Activated CD4-positive, alpha-beta T cell treated with anti-CD3 and anti-CD28 coated beads, Interleukin-2, amount 10 ng/mL, durations not matched to agents 24 days and 14 days (primary cell): ENCODE measurements at regions of chr10 and their contacts with region 1.

Region 1: DNA sequence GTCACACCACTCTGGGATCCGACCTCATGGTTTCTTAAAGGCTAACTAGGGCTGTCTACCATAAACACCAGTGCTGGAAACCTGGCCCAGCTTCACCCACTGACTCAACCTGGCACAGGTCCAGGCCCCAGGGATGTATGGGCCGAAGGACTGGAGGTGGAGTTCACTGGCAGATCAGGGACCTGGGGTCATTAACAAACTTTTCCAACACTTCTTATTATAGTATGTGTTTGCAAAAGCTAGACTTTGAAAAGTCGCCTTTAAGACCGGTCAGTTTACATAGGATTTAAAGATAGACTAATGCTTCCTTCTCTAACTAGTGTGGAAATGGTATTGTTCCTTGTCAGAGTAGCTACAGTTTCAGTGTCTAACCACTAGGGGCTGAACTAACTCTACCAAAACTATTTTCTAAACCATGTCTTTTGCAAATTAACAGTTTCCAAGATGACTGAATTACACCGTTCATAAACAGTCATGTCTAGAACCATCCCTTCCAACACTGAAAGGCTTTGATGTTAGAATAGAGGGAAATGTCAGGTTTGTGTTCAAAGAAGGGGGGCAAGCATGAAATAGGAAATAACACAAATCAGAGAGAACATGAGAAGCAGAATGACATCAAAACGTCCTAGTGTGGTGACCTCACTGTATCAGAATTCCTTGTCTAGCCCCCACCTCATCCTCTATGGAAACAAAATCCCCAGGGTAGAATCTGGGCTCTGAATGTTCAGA is 29.7 kb downstream of the STN1 start:
- DNase-seq: peak; percentile 70
- H3K4me3 Mint-ChIP-seq: no peak overlapping the region
- H3K27ac Mint-ChIP-seq: peak overlapping the region; percentile 76
- H3K4me1 Mint-ChIP-seq: peaks cover 28% of the 10 kb centered on the region
- H3K27me3 Mint-ChIP-seq: no peaks in the 10 kb centered on the region

Region 2: GRCh38 chr10:103712570-103713498 is 175.4 kb before region 1 on chr10:
- intact Hi-C with region 1: loop called (anchors 1 kb)
- DNase-seq: peak; percentile 95
- H3K4me3 Mint-ChIP-seq: no peak overlapping the region
- H3K27ac Mint-ChIP-seq: no peak overlapping the region
- H3K4me1 Mint-ChIP-seq: peaks cover 8% of the 10 kb centered on the region
- H3K27me3 Mint-ChIP-seq: no peaks in the 10 kb centered on the region

Region 3: GRCh38 chr10:103859161-103860086 is 28.9 kb before region 1 on chr10:
- intact Hi-C with region 1: no loop called
- DNase-seq: peak; percentile 89
- H3K4me3 Mint-ChIP-seq: no peak overlapping the region
- H3K27ac Mint-ChIP-seq: no peak overlapping the region
- H3K4me1 Mint-ChIP-seq: peaks cover 6% of the 10 kb centered on the region
- H3K27me3 Mint-ChIP-seq: peaks cover 45% of the 10 kb centered on the region

Region 4: GRCh38 chr10:103918053-103918846 is 30.0 kb after region 1 on chr10 and contains the start of gene STN1:
- intact Hi-C with region 1: loop called (anchors 1 kb)
- DNase-seq: peak; percentile 98
- H3K4me3 Mint-ChIP-seq: peak within 1 kb of the TSS; percentile 97
- H3K27ac Mint-ChIP-seq: peak within 1 kb of the TSS; percentile 97
- H3K4me1 Mint-ChIP-seq: peaks cover 33% of the 10 kb centered on the region
- H3K27me3 Mint-ChIP-seq: no peaks in the 10 kb centered on the region
- total RNA-seq, gene STN1: 23.6 and 24.1 TPM in 2 replicates

Region 5: DNA sequence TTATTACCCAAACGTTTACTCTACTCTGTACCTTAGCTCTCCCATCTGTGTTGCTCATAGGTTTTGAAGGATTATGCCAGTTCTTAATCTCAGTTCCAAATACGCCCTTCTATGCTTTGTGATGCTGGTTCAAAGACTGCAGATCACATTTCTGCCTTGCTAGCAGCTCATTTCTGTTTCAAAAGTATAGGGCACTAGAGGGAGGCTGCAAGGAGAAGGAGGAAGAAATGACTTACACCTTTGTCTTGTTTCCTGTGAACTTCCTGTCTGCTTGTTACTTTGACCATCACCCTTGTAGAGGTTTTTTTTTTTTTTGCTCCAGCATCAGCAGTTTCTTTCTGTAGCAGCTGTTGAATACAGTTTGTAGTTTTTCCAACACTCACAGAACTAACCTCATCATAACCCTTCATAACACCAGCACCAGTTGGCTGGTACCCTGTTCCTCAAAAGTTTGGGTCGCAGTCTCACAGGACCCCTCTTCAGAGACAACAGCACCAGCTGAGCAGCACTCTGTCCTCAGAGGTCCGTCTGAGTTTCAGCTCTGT is 95.2 kb after region 1 on chr10:
- intact Hi-C with region 1: loop called (anchors 1 kb)
- DNase-seq: peak; percentile 77
- H3K4me3 Mint-ChIP-seq: peak overlapping the region; percentile 79
- H3K27ac Mint-ChIP-seq: peak overlapping the region; percentile 78
- H3K4me1 Mint-ChIP-seq: peaks cover 49% of the 10 kb centered on the region
- H3K27me3 Mint-ChIP-seq: no peaks in the 10 kb centered on the region

Region 6: DNA sequence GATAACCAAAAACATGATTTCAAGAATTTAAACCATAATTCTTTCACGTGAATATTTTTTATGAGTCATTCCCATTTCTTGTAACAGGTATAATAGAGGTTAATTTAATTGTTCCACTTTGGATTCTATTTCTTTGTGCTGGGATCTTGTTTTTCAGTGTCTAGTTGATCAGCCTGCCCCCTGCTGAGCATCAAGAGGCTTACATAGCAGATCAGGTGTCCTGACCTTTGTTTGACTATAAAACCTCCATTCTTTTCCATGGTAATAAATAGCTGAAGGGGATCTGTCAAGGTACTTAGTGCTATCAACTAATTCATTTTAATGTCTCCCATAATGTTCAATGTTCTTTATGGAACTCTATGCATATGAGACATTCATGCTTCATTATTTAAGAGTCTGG is 192.5 kb after region 1 on chr10:
- intact Hi-C with region 1: loop called (anchors 1 kb)
- DNase-seq: no peak
- H3K4me3 Mint-ChIP-seq: no peak overlapping the region
- H3K27ac Mint-ChIP-seq: no peak overlapping the region
- H3K4me1 Mint-ChIP-seq: no peaks in the 10 kb centered on the region
- H3K27me3 Mint-ChIP-seq: peaks cover 7% of the 10 kb centered on the region

Region 7: GRCh38 chr10:104190695-104191094 is 302.4 kb after region 1 on chr10:
- intact Hi-C with region 1: no loop called
- DNase-seq: no peak
- H3K4me3 Mint-ChIP-seq: no peak overlapping the region
- H3K27ac Mint-ChIP-seq: no peak overlapping the region
- H3K4me1 Mint-ChIP-seq: no peaks in the 10 kb centered on the region
- H3K27me3 Mint-ChIP-seq: peaks cover 50% of the 10 kb centered on the region

Region 8: DNA sequence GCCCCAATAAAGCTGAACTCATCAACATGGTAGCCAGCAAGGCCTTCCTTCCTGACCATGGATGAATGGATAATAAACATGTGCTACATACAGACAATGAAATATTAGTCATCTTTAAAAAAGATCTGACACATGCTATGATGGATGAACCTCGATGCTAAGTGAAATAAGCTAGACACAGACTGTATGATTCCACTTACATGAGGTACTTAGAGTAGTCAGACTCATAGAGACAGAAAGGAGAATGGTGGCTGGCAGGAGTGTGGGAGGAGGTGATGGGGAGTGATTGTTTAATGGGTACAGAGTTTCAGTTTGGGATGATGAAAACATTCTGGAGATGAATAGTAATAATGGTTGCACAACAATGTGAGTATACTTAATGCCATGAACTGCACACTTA is 638.7 kb after region 1 on chr10:
- intact Hi-C with region 1: no loop called
- DNase-seq: no peak
- H3K4me3 Mint-ChIP-seq: no peak overlapping the region
- H3K27ac Mint-ChIP-seq: no peak overlapping the region
- H3K4me1 Mint-ChIP-seq: no peaks in the 10 kb centered on the region
- H3K27me3 Mint-ChIP-seq: peaks cover 4% of the 10 kb centered on the region